ENCODE measurements at regions of chr15 and their contacts with region 1.

Region 1: GRCh38 chr15:48536681-48537091 is 108.8 kb downstream of the FBN1 start:
- DNase-seq: no peak
- H3K4me3 ChIP-seq: no peak overlapping the region
- H3K27ac ChIP-seq: no peak overlapping the region
- H3K4me1 ChIP-seq: peaks cover under 1% of the 10 kb centered on the region
- H3K27me3 ChIP-seq: no peaks in the 10 kb centered on the region
- CTCF ChIP-seq: no peak

Region 2: GRCh38 chr15:48592221-48592731 is 55.6 kb after region 1 on chr15:
- CTCF ChIA-PET with region 1: no interaction called
- dilution Hi-C with region 1: no loop called
- in situ Hi-C with region 1: loop called in 1 of 2 experiments (anchors 10 kb)
- intact Hi-C with region 1: no loop called
- DNase-seq: peak; percentile 60
- H3K4me3 ChIP-seq: no peak overlapping the region
- H3K27ac ChIP-seq: no peak overlapping the region
- H3K4me1 ChIP-seq: no peaks in the 10 kb centered on the region
- H3K27me3 ChIP-seq: no peaks in the 10 kb centered on the region
- CTCF ChIP-seq: no peak

Region 3: DNA sequence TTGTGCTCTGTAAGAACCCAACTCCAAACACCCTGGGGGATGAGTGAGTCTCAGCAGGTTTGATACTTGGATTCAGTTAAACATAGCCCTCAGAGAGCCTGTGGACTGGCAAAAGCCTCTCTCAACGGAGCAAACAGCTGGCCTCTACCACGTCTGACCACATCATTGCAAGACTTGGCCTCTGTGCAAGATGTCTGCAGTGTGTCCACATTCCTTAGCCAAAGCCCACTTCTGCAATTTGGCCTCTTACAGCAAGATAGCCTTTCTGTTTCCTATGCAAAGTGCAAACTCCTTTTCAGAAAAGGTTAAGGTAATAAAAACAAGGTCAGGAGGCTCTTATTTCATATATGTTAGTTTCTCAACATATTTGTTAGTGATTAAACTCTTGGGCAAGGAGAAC is 80.9 kb after region 1 on chr15:
- CTCF ChIA-PET with region 1: interaction called, 11 read pairs
- dilution Hi-C with region 1: no loop called
- in situ Hi-C with region 1: no loop called
- intact Hi-C with region 1: no loop called
- DNase-seq: no peak
- H3K4me3 ChIP-seq: no peak overlapping the region
- H3K27ac ChIP-seq: no peak overlapping the region
- H3K4me1 ChIP-seq: no peaks in the 10 kb centered on the region
- H3K27me3 ChIP-seq: no peaks in the 10 kb centered on the region
- CTCF ChIP-seq: no peak